Left cardiac atrium (tissue), 4 donors: ENCODE measurements at regions of chr3 and their contacts with region 1.

Region 1: GRCh38 chr3:172476347-172476746 is 28.1 kb upstream of the GHSR start:
- DNase-seq: no peak
- ATAC-seq: peak in 1 of 2 donors; percentile 18

Region 2: GRCh38 chr3:172622916-172623700 is 146.8 kb after region 1 on chr3:
- intact Hi-C with region 1: loop called in 1 of 2 experiments (anchors 10 kb)
- DNase-seq: no peak
- ATAC-seq: peak in 1 of 2 donors; percentile 63